ENCODE measurements at regions of chr3 and their contacts with region 1.

Region 1: DNA sequence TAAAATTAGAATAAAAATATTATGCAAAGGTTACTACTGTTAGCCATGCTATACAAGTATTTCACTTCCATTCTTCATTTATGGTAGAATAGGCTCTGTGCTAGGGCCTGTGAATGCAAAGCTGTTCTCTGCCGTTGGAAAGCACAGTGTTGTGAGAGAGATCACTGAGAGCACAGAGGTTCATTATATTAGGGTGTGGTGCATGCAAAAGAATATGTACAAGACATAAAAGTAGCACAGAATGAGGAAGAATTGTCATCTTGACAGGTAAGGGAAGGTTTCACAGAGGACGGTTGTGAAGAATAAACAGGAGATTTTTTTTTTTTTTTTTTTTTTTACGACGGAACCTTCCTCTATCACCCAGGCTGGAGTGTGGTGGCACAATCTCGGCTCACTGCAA is 25.2 kb upstream of the FNDC3B start:
- DNase-seq: no peak
- H3K4me3 ChIP-seq: no peak overlapping the region
- H3K27ac ChIP-seq: no peak overlapping the region
- H3K4me1 ChIP-seq: no peaks in the 10 kb centered on the region
- H3K27me3 ChIP-seq: no peaks in the 10 kb centered on the region
- CTCF ChIP-seq: no peak
- EP300 ChIP-seq: no peak
- POLR2A ChIP-seq: no peak

Region 2: GRCh38 chr3:171306631-171307030 is 707.5 kb before region 1 on chr3:
- intact Hi-C with region 1: no loop called
- DNase-seq: peak in 4 of 5 donors; percentile 41 to 52 (median 46)
- H3K4me3 ChIP-seq: no peak overlapping the region
- H3K27ac ChIP-seq: no peak overlapping the region
- H3K4me1 ChIP-seq: no peaks in the 10 kb centered on the region
- H3K27me3 ChIP-seq: no peaks in the 10 kb centered on the region
- CTCF ChIP-seq: no peak
- EP300 ChIP-seq: no peak
- POLR2A ChIP-seq: no peak

Region 3: DNA sequence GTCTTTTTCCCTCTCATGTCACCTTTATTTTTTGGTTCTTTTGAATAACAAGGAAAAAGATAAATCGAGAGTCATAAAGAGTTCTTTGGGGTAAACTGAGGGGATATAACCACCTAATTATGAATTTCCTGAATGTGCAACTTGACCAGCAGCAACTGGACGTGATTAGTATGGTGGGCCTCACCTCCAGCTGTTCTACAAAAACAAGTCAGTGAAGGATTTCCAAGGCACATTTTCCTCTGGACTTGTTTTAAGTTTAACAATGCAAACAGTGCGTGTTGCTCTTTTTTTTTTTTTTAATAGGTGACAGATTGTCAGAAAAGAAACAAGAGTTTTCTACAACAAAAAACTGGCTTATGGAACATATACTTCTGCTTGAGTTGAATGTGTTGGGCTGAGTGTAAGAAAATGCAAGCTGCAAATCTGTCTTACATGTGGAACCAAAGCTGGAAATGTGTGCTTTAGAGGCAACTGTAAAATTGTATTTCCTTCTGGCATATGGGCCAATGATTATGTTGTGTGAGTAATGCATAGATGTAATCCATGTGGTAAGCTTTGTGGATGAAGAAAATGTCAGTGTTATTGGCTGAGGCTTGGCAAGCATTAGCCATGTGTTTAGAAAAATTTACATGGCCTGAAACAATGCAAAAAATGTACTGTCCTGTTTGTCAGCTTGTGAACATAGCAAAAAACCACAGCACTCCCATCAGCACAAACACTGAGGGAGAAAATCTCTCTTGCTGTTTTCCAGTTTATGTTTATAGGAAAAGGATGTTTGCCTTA is 19.3 kb before region 1 on chr3:
- intact Hi-C with region 1: loop called in 1 of 4 experiments (anchors 2 kb)
- DNase-seq: no peak
- H3K4me3 ChIP-seq: no peak overlapping the region
- H3K27ac ChIP-seq: no peak overlapping the region
- H3K4me1 ChIP-seq: no peaks in the 10 kb centered on the region
- H3K27me3 ChIP-seq: no peaks in the 10 kb centered on the region
- CTCF ChIP-seq: no peak
- EP300 ChIP-seq: no peak
- POLR2A ChIP-seq: no peak

Region 4: DNA sequence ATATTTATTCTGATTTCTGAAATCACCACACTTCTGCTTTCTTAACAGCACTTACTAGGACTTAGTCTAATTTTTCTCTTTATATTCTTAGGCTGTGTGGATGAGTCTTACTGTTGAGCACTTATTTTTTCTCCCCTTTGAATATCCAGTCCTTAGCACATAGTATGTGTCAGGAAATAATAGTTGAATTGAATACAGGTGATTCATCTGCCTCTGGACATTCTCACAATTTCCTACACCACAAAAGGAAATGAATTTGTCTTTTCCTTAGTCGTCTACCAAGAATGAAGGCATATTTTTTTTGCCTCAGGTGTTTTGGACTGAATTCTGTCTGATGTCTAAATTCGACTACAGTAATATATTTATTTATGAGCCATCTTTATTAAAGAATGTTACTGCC is 229.9 kb after region 1 on chr3:
- intact Hi-C with region 1: no loop called
- DNase-seq: no peak
- H3K4me3 ChIP-seq: no peak overlapping the region
- H3K27ac ChIP-seq: no peak overlapping the region
- H3K4me1 ChIP-seq: peaks cover 6% of the 10 kb centered on the region
- H3K27me3 ChIP-seq: no peaks in the 10 kb centered on the region
- CTCF ChIP-seq: no peak
- EP300 ChIP-seq: no peak
- POLR2A ChIP-seq: no peak